OCI-LY7 (cell line): ENCODE measurements at regions of chr3 and their contacts with region 1.

Region 1: DNA sequence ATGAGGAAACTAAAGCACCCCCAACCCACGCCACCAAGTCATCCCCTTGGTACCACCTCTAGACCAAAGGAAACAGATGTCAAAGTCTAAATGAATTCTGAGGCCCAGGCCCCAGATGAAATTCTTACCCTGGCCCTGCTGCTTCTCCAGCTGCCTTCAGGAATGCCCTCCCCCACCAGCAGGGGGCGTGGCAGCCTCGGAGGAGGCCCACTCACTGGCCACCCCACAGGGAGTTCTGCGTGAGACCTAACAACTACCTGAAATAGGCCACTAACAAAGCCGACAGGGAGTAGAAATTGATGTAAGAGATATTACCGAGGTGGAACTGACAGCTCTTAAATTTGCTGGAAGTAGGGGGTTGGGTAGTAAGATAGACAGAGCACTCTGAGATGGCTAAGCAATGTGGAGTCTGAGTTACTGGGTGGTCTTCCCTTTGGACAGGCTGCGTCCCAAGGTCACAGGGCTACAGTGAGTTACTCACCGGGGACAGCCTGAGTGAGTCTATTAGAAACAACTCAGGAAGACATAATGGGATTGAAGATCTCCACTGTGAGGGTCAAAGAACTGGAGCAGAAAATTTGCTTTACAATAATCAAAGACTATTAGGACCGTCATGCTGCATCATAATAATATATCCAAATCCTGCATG is 240.7 kb downstream of the SHOX2 start:
- DNase-seq: peak; percentile 57
- H3K4me3 ChIP-seq: no peak overlapping the region
- H3K27ac ChIP-seq: no peak overlapping the region
- H3K4me1 ChIP-seq: no peaks in the 10 kb centered on the region
- CTCF ChIP-seq: peak; percentile 94

Region 2: DNA sequence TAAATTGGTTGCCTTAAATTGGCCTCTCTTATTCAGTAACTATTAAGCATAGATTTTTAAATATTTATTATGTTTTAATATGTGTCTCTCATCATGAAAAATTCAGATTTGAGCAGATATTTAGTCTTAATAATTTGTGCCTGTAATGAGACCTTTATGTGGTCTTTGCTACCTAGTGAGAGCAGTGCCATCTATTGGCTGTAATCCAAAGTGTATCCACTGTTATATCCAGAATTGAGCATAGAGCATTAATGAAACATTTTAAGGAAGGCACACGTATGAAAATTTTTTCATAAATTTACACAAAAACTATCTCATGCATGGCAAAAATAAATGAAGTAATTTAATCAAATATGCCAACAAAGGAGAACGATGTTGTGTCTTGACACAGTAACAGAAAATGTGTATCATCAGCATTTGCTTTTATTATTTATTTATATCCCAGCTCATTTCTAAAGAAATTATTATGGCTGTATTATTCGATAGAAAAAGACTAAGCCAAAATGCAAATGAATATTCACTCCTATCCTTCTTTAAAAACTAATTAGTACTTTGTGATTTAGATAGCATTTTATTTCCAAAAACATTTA is 448.0 kb after region 1 on chr3:
- CTCF ChIA-PET with region 1: no interaction called
- POLR2A ChIA-PET with region 1: no interaction called
- intact Hi-C with region 1: loop called (anchors 5 kb)
- DNase-seq: peak; percentile 52
- H3K4me3 ChIP-seq: no peak overlapping the region
- H3K27ac ChIP-seq: no peak overlapping the region
- H3K4me1 ChIP-seq: no peaks in the 10 kb centered on the region
- CTCF ChIP-seq: peak; percentile 94

Region 3: DNA sequence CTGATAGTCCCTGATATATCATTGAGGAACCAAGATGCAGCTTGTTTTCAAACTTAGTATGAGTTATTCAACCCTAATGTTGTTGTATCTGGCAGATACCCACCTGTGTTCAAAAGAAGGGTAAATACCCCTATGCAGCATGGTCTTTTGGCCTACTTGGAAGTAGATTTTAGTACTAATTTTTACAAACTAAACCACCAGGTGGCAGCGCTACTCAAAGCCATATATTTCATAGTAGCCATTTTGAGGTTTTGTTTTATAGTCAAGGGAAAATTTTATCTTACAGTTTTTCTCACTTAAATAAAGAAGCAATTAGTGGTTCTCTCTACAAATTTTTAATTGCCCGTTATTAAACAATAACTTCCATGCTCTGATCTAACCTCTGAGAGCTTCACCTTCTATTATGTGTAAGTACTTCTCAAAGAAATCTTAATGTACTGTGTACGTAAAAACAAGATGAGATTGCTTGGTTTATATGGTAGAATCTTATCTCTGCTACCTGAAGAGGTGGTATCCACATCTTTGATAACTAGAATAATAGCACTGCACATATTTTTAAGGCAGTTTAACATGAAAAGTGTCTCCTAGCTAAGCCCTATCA is 674.0 kb after region 1 on chr3:
- CTCF ChIA-PET with region 1: no interaction called
- POLR2A ChIA-PET with region 1: no interaction called
- intact Hi-C with region 1: loop called (anchors 5 kb)
- DNase-seq: peak; percentile 47
- H3K4me3 ChIP-seq: no peak overlapping the region
- H3K27ac ChIP-seq: no peak overlapping the region
- H3K4me1 ChIP-seq: no peaks in the 10 kb centered on the region
- CTCF ChIP-seq: peak; percentile 84